ENCODE measurements at regions of chr6 and their contacts with region 1.

Region 1: DNA sequence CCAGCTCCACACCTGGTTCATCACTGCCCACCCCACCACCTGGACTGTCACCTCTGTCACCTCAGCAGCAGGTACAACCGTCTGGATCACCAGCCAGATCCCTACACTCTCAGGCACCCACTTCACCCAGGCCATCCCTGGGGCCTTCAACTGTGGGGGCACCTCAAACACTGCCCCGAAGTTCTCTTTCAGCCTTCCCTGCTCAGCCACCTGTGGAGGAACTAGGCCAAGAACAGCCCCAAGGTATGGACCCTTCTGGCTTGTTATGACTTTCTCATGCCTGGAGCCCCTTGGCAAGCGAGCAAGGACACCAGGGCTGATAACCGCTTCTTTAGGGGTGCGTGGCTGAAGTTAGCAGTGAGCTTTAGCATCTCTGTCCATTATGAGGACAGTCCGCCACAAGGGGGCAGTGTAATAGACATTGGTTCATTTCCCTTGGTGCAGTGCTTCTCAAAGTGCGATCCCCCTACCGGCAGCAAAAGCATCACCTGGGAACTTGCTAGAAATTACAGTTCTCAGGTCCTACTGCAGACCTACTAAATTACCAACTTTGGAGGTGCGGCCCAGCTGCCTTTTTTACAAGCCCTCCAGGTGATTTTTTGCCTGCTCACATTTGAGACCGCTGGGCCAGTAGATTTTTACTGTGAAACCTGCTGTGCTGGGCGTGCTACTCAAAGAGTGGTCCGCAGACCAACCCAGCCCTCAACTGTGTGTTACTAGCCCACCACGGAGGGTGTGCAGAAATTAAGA is 32.5 kb downstream of the PNPLA1 start:
- DNase-seq: peak; percentile 87 to 94 (median 92)
- H3K4me3 ChIP-seq: no peak overlapping the region
- H3K4me3 Mint-ChIP-seq: no peak overlapping the region
- H3K27ac ChIP-seq: no peak overlapping the region
- H3K27ac Mint-ChIP-seq: peak overlapping the region in 6 of 7 donors; percentile 40 to 88 (median 81)
- H3K4me1 ChIP-seq: peaks cover 29 to 35% of the 10 kb centered on the region in 2 donors
- H3K4me1 Mint-ChIP-seq: peaks cover 47% of the 10 kb centered on the region
- H3K27me3 ChIP-seq: no peaks in the 10 kb centered on the region
- H3K27me3 Mint-ChIP-seq: peaks cover 0 to 8% (median 2%) of the 10 kb centered on the region in 3 donors
- CTCF ChIP-seq: peak; percentile 99

Region 2: DNA sequence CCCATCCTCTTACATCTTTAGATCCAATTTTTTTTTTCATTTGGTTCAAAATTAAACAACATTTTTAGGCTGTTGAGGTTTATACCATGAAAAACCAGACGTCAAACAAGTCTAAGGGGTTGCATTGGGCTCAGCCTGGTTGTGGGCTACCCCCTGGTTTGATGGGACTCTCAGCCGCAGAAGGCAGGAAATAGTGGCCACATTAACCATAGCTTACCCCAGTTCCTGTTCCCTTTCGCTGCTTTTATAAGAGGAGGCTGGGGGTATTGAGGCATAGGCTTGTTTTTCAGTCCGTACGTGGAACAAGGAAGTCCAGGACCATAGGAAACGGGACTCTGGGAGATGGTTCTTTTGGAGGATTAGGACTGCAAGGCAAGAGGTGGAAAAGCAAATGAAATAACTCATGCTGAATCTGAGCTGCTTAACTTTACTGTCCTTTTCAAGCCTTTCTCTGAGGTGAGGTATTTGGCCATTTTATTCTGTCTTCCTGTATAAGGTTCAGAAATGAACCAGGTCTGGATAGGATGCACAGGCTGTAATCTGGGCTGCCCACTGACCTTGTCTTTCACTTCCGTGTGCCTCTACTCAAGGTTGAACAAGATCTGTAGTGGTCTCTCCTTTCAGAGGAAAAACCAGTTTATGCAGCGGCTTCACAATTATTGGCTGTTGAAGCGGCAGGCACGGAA is 98.2 kb before region 1 on chr6:
- intact Hi-C with region 1: no loop called
- DNase-seq: peak in 2 of 3 donors; percentile 25 to 39
- H3K4me3 ChIP-seq: no peak overlapping the region
- H3K4me3 Mint-ChIP-seq: peak overlapping the region; percentile 3 to 43
- H3K27ac ChIP-seq: no peak overlapping the region
- H3K27ac Mint-ChIP-seq: peak overlapping the region in 4 of 7 donors; percentile 24 to 71 (median 54)
- H3K4me1 ChIP-seq: peaks cover 14 to 24% of the 10 kb centered on the region in 2 donors
- H3K4me1 Mint-ChIP-seq: peaks cover 33% of the 10 kb centered on the region
- H3K27me3 ChIP-seq: no peaks in the 10 kb centered on the region
- H3K27me3 Mint-ChIP-seq: peaks cover 0 to 2% (median 0%) of the 10 kb centered on the region in 3 donors
- CTCF ChIP-seq: no peak

Region 3: GRCh38 chr6:36248980-36249379 is 53.4 kb before region 1 on chr6:
- intact Hi-C with region 1: no loop called
- DNase-seq: no peak
- H3K4me3 ChIP-seq: peak overlapping the region in 1 of 3 experiments; percentile 18
- H3K4me3 Mint-ChIP-seq: no peak overlapping the region
- H3K27ac ChIP-seq: peak overlapping the region; percentile 80 to 89
- H3K27ac Mint-ChIP-seq: peak overlapping the region; percentile 85 to 95 (median 92)
- H3K4me1 ChIP-seq: peaks cover 58 to 63% of the 10 kb centered on the region in 2 donors
- H3K4me1 Mint-ChIP-seq: peaks cover 63% of the 10 kb centered on the region
- H3K27me3 ChIP-seq: no peaks in the 10 kb centered on the region
- H3K27me3 Mint-ChIP-seq: peaks cover 0 to 5% (median 3%) of the 10 kb centered on the region in 3 donors
- CTCF ChIP-seq: no peak

Region 4: DNA sequence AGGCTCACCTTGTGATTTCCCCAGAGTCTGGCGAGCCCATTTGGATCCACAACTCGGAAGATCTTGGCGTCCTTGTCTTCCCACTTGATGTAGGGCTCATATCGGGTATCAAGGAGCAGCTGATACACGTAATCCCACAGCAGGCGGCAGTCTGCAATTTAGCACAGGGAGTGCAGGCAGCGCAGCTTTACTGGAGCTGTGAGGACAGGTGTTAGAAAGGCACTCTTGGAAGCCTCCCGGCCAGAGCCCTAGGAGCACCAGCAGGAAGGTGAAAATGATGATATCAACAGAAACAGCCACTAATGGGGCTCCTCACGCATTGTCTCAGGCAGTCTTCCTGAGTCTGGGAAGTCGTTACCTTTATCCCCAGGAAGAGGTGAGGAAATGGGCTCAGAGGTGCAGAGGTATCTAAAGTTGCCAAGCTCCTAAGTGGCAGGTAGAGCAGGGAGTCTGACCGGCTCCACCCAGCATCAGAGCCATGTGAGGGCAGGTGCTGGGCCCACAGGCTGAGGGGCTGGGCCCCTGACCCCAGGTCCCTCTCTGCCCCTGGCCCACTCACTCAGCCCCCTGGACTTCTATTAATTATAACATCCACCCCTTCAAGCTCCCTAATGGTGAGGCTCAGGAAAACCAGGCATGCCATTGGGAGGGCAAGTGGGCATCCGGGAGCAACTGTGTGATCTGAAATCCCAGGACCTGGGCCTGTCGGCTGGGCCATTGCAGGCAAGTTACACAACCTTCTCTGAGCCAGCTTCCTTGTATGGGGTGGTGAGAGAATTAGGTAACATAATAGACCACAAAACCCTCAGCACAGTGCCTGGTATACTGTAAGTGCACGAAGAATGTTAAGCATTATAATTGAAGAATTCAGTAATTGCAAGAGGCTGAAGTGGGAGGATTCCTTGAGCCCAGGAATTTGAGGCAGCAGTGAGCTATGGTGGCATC is 66.8 kb after region 1 on chr6:
- intact Hi-C with region 1: loop called in 1 of 2 experiments (anchors 5 kb)
- DNase-seq: peak; percentile 70 to 84 (median 81)
- H3K4me3 ChIP-seq: no peak overlapping the region
- H3K4me3 Mint-ChIP-seq: no peak overlapping the region
- H3K27ac ChIP-seq: peak overlapping the region; percentile 48 to 54
- H3K27ac Mint-ChIP-seq: peak overlapping the region; percentile 49 to 84 (median 74)
- H3K4me1 ChIP-seq: peaks cover 48 to 52% of the 10 kb centered on the region in 2 donors
- H3K4me1 Mint-ChIP-seq: peaks cover 54% of the 10 kb centered on the region
- H3K27me3 ChIP-seq: no peaks in the 10 kb centered on the region
- H3K27me3 Mint-ChIP-seq: peaks cover 3 to 7% (median 3%) of the 10 kb centered on the region in 3 donors
- CTCF ChIP-seq: no peak

Region 5: GRCh38 chr6:36428911-36429310 is 126.5 kb after region 1 on chr6:
- intact Hi-C with region 1: no loop called
- DNase-seq: peak in 1 of 3 donors; percentile 14
- H3K4me3 ChIP-seq: no peak overlapping the region
- H3K4me3 Mint-ChIP-seq: no peak overlapping the region
- H3K27ac ChIP-seq: no peak overlapping the region
- H3K27ac Mint-ChIP-seq: peak overlapping the region in 2 of 7 donors; percentile 20 to 45
- H3K4me1 ChIP-seq: peaks cover 0 to under 1% of the 10 kb centered on the region in 2 donors
- H3K4me1 Mint-ChIP-seq: peaks cover 3% of the 10 kb centered on the region
- H3K27me3 ChIP-seq: no peaks in the 10 kb centered on the region
- H3K27me3 Mint-ChIP-seq: peaks cover 2 to 4% (median 2%) of the 10 kb centered on the region in 3 donors
- CTCF ChIP-seq: no peak

Region 6: GRCh38 chr6:37257634-37258404 is 955.4 kb after region 1 on chr6 and contains the starts of genes TBC1D22B and TMEM217:
- intact Hi-C with region 1: no loop called
- DNase-seq: peak; percentile 85 to 94 (median 94)
- H3K4me3 ChIP-seq: peak within 1 kb of the TSS; percentile 51 to 90 (median 68)
- H3K4me3 Mint-ChIP-seq: peak within 1 kb of the TSS; percentile 92 to 95
- H3K27ac ChIP-seq: peak within 1 kb of the TSS; percentile 59 to 92
- H3K27ac Mint-ChIP-seq: peak within 1 kb of the TSS; percentile 89 to 97 (median 96)
- H3K4me1 ChIP-seq: peaks cover 26 to 33% of the 10 kb centered on the region in 2 donors
- H3K4me1 Mint-ChIP-seq: peaks cover 43% of the 10 kb centered on the region
- H3K27me3 ChIP-seq: no peaks in the 10 kb centered on the region
- H3K27me3 Mint-ChIP-seq: peaks cover 0 to 3% (median 1%) of the 10 kb centered on the region in 3 donors
- CTCF ChIP-seq: no peak
- polyA plus RNA-seq, gene TBC1D22B: 3.9 to 5.0 (median 4.9) TPM
- polyA plus RNA-seq, gene TMEM217: 0.09 to 0.29 TPM in 2 of 3 donors, not detected in the other

Measured in CD14-positive monocyte (primary cell).